ENCODE measurements at regions of chr2 and their contacts with region 1.

Region 1: DNA sequence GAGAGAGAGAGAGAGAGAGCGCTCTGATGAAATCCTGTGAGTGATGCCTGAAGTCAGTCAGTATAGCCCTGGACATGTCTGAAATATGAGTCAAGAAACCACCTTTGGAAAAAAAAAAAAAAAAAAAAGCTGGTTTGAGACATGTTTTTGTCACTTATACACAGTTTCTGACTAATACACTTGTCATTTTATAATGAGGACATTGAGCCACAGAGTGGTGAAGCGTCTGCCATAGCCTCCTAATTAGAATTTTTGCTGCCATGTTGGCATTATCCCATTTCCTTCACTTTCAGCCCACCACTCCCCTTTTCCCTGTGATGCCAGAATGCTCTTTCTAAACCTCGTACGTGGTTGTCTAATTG is 15.7 kb upstream of the MYO3B start:
- DNase-seq: no peak
- ATAC-seq: no peak
- H3K4me3 ChIP-seq: no peak overlapping the region
- H3K27ac ChIP-seq: no peak overlapping the region
- H3K4me1 ChIP-seq: peaks cover 36% of the 10 kb centered on the region
- H3K27me3 ChIP-seq: no peaks in the 10 kb centered on the region
- CTCF ChIP-seq: no peak
- EP300 ChIP-seq: no peak
- POLR2A ChIP-seq: no peak
- RAD21 ChIP-seq: no peak

Region 2: GRCh38 chr2:169782513-169782912 is 379.7 kb before region 1 on chr2:
- CTCF ChIA-PET with region 1: no interaction called
- POLR2A ChIA-PET with region 1: no interaction called
- RAD21 ChIA-PET with region 1: no interaction called
- SMC1A ChIA-PET with region 1: no interaction called
- in situ Hi-C with region 1: no loop called
- intact Hi-C with region 1: no loop called
- DNase-seq: no peak
- ATAC-seq: no peak
- H3K4me3 ChIP-seq: no peak overlapping the region
- H3K27ac ChIP-seq: no peak overlapping the region
- H3K4me1 ChIP-seq: no peaks in the 10 kb centered on the region
- H3K27me3 ChIP-seq: no peaks in the 10 kb centered on the region
- CTCF ChIP-seq: no peak
- EP300 ChIP-seq: no peak
- POLR2A ChIP-seq: no peak
- RAD21 ChIP-seq: no peak

Region 3: DNA sequence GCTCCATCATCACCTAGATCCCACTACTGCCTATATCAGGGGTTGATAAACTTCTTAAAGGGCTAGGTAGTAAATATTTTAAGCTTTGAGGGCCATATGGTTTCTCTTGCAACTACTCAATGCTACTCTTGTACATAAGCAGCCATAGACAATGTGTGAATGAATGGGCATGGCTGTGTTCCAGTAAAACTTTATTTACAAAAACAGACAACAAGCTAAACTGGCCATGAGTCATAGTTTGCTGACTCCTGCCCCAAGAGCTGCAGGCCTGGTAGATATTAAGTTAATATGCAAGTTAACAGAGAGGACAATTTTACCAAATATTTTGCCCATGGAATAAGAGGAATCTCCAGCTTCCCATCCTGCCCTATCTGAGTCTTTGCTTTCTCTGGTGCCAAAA is 14.1 kb before region 1 on chr2:
- CTCF ChIA-PET with region 1: interaction called, 36 read pairs
- POLR2A ChIA-PET with region 1: interaction called, 28 read pairs
- RAD21 ChIA-PET with region 1: interaction called, 36 read pairs
- SMC1A ChIA-PET with region 1: interaction called, 162 read pairs
- in situ Hi-C with region 1: no loop called
- intact Hi-C with region 1: no loop called
- DNase-seq: no peak
- ATAC-seq: no peak
- H3K4me3 ChIP-seq: no peak overlapping the region
- H3K27ac ChIP-seq: no peak overlapping the region
- H3K4me1 ChIP-seq: peaks cover 21% of the 10 kb centered on the region
- H3K27me3 ChIP-seq: no peaks in the 10 kb centered on the region
- CTCF ChIP-seq: no peak
- EP300 ChIP-seq: no peak
- POLR2A ChIP-seq: no peak
- RAD21 ChIP-seq: no peak

Region 4: DNA sequence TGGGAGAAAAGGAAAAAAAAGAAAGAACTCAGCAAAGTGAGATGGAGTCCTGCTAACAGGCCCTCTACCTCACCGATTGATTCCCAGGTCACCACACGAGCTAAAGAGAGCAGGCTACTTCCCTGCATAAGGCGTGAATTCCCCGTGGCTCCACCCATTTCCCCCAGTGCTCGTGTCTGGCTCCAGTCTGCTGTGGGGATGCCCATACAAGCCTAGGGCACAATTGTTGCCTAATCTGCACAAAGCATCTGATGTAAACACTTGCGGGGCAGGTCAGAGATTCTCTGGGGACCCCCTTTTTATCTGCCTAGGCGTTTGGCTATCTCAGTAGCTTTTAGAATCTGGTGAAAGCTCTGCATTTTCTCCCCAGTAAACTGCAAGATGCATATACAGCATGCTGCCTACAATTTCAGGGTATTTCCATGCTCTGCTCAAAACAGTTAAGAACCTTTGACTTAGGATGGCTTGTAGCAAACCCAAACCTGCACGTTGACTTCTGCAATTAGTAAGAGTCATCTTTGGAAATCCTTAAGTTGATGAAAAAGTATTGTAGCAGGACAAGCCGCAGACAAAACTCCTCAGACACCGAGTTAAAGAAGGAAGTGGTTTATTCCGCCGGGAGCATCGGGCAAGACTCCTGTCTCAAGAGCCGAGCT is 50.5 kb after region 1 on chr2:
- CTCF ChIA-PET with region 1: interaction called, 4 read pairs
- POLR2A ChIA-PET with region 1: interaction called, 4 read pairs
- RAD21 ChIA-PET with region 1: interaction called, 6 read pairs
- SMC1A ChIA-PET with region 1: interaction called, 15 read pairs
- in situ Hi-C with region 1: no loop called
- intact Hi-C with region 1: no loop called
- DNase-seq: peak; percentile 64
- ATAC-seq: peak; percentile 72
- H3K4me3 ChIP-seq: peak overlapping the region; percentile 42
- H3K27ac ChIP-seq: peak overlapping the region; percentile 51
- H3K4me1 ChIP-seq: peaks cover 24% of the 10 kb centered on the region
- H3K27me3 ChIP-seq: no peaks in the 10 kb centered on the region
- CTCF ChIP-seq: no peak
- EP300 ChIP-seq: no peak
- POLR2A ChIP-seq: no peak
- RAD21 ChIP-seq: no peak